Activated naive CD4-positive, alpha-beta T cell treated with anti-CD3 and anti-CD28 coated beads for 36 hours (primary cell): ENCODE measurements at regions of chr10 and their contacts with region 1.

Region 1: DNA sequence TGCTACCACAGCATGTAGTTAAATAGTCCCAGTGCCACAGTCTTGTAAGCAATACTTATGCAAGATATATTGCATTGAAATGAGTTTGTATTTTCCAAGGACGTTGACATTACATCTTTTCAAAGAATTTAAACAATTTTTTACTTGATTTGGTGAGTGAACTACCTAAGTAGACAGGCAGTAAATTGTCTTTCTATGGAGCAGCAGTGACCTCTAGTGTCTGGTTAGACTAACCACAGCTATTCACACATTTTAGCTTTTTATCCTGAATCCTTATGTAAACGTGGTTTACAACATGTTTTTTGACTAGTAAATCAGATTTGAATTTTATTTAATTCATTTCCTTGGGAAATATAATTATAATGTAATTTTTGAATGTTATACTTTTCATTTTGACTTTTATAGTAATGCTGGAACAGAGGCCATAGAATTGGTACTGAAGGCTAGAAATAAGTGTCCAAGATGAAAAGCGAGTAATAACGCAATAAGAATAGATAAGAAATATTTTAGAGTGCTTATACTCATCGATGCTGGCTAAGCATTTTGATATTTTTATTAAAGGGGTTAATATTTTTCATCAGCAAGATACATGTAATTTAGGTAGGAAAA is 5.6 kb downstream of the LRRTM3 start:
- DNase-seq: peak; percentile 6
- H3K4me3 Mint-ChIP-seq: no peak overlapping the region
- H3K27ac Mint-ChIP-seq: no peak overlapping the region
- H3K4me1 Mint-ChIP-seq: peaks cover 1% of the 10 kb centered on the region
- H3K27me3 Mint-ChIP-seq: peaks cover 38% of the 10 kb centered on the region

Region 2: DNA sequence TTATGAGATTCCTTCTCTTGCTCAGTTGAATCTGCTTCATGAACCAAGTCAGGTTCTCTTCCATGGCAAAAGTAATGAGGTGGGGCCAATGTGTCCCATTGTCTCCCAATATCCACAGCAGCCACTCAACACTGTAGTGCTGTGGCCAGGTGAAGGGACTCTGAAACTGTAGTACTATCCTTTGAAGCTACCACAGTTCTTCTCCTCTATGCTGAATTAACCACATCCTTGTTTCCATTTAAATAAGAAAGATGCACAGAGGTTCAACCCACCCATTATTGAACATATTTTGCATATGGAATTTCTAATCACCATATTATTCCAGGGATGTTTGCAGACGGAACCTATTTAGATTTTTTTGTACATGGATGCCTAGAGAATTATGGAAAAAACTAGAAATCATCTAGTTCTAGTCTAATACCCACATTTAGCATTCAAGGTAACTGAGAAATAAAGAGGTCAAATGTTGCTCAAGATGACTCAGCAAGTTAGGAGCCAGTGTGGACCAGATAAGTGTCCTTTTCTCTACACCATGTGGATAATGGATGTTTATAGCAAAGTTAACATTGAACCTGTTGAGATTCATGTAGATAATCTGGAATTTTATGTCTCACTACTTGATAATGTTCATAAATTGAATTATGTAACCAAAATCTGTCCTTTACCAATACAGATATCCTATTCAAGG is 58.8 kb after region 1 on chr10:
- CTCF ChIA-PET with region 1: no interaction called
- intact Hi-C with region 1: no loop called
- DNase-seq: no peak
- H3K4me3 Mint-ChIP-seq: no peak overlapping the region
- H3K27ac Mint-ChIP-seq: no peak overlapping the region
- H3K4me1 Mint-ChIP-seq: no peaks in the 10 kb centered on the region
- H3K27me3 Mint-ChIP-seq: no peaks in the 10 kb centered on the region

Region 3: DNA sequence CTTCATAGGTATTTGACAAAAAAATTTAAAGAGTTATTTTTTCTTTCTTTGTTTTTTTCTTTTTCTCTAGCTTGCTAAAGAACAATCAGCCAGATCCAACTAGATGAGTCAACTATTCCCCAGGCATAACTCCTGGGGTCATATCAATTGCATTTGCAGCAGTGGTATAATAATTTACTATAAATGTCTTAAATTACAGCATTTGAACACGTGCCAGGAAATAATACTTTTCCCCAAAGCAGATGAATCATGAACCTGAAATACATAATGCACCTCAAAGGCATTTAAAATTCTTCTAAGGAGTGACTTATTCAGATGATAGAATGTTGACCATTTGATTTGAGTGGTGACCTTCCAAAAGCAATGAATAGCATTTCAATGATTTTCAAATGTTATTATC is 184.5 kb after region 1 on chr10:
- CTCF ChIA-PET with region 1: no interaction called
- intact Hi-C with region 1: no loop called
- DNase-seq: no peak
- H3K4me3 Mint-ChIP-seq: no peak overlapping the region
- H3K27ac Mint-ChIP-seq: no peak overlapping the region
- H3K4me1 Mint-ChIP-seq: no peaks in the 10 kb centered on the region
- H3K27me3 Mint-ChIP-seq: no peaks in the 10 kb centered on the region

Region 4: DNA sequence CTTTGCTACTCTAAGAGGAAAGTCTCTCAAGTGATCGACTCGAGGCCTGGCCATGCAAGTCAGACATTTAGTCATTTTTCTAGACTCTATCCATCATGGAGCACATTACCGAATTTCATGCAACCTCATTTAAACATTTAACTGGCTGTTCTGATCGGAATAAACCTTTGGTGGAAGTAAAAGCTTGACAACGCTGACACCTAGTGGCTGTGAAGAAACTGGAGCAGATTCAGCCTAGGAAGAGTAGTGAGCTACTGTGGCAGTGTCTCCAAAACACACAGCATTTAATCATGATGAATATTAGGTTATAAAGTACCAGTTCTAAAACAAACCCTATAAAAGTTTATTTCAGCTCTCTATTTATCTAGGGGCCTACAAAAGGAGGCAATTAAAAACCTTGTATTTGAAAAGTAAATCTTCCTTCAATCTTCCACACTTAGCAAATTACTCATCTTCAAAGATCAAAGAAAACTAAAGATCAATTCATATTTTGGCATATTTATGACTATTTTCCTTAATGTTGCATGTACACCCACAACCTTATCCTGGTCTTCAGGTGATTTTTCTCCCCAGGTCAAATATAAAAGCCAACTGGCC is 589.6 kb after region 1 on chr10:
- CTCF ChIA-PET with region 1: no interaction called
- intact Hi-C with region 1: loop called (anchors 2 kb)
- DNase-seq: peak; percentile 54
- H3K4me3 Mint-ChIP-seq: no peak overlapping the region
- H3K27ac Mint-ChIP-seq: no peak overlapping the region
- H3K4me1 Mint-ChIP-seq: peaks cover 1% of the 10 kb centered on the region
- H3K27me3 Mint-ChIP-seq: no peaks in the 10 kb centered on the region